Adrenal gland (tissue), 19 donors: ENCODE measurements at regions of chr6 and their contacts with region 1.

Region 1: GRCh38 chr6:150079604-150080003 is 10.7 kb upstream of the ULBP3 start:
- DNase-seq: peak in 1 of 7 donors; percentile 6
- H3K4me3 ChIP-seq: no peak overlapping the region
- H3K27ac ChIP-seq: no peak overlapping the region
- H3K4me1 ChIP-seq: no peaks in the 10 kb centered on the region
- H3K27me3 ChIP-seq: no peaks in the 10 kb centered on the region
- CTCF ChIP-seq: no peak
- POLR2A ChIP-seq: no peak

Region 2: GRCh38 chr6:149922642-149923326 is 156.8 kb before region 1 on chr6 and contains the start of gene RAET1G:
- intact Hi-C with region 1: no loop called
- DNase-seq: peak; percentile 95 to 98 (median 97)
- H3K4me3 ChIP-seq: peak within 1 kb of the TSS; percentile 22 to 51 (median 40)
- H3K27ac ChIP-seq: peak within 1 kb of the TSS in 1 of 5 donors; percentile 37
- H3K4me1 ChIP-seq: peaks cover 10 to 16% of the 10 kb centered on the region in 2 donors
- H3K27me3 ChIP-seq: no peaks in the 10 kb centered on the region
- CTCF ChIP-seq: no peak
- POLR2A ChIP-seq: peak in 1 of 2 donors; percentile 70
- total RNA-seq, gene RAET1G: 0.22 to 29.8 (median 11.6) TPM

Region 3: GRCh38 chr6:150334790-150335783 is 255.5 kb after region 1 on chr6:
- intact Hi-C with region 1: loop called (anchors 5 kb)
- DNase-seq: peak; percentile 41 to 78 (median 55)
- H3K4me3 ChIP-seq: no peak overlapping the region
- H3K27ac ChIP-seq: no peak overlapping the region
- H3K4me1 ChIP-seq: no peaks in the 10 kb centered on the region
- H3K27me3 ChIP-seq: no peaks in the 10 kb centered on the region
- CTCF ChIP-seq: peak; percentile 63 to 84 (median 78)
- POLR2A ChIP-seq: no peak

Region 4: GRCh38 chr6:150346346-150346745 is 266.7 kb after region 1 on chr6:
- intact Hi-C with region 1: no loop called
- DNase-seq: peak in 1 of 7 donors; percentile 45
- H3K4me3 ChIP-seq: no peak overlapping the region
- H3K27ac ChIP-seq: no peak overlapping the region
- H3K4me1 ChIP-seq: no peaks in the 10 kb centered on the region
- H3K27me3 ChIP-seq: no peaks in the 10 kb centered on the region
- CTCF ChIP-seq: no peak
- POLR2A ChIP-seq: no peak